Aorta (tissue), 5 donors: ENCODE measurements at regions of chr1 and their contacts with region 1.

Region 1: DNA sequence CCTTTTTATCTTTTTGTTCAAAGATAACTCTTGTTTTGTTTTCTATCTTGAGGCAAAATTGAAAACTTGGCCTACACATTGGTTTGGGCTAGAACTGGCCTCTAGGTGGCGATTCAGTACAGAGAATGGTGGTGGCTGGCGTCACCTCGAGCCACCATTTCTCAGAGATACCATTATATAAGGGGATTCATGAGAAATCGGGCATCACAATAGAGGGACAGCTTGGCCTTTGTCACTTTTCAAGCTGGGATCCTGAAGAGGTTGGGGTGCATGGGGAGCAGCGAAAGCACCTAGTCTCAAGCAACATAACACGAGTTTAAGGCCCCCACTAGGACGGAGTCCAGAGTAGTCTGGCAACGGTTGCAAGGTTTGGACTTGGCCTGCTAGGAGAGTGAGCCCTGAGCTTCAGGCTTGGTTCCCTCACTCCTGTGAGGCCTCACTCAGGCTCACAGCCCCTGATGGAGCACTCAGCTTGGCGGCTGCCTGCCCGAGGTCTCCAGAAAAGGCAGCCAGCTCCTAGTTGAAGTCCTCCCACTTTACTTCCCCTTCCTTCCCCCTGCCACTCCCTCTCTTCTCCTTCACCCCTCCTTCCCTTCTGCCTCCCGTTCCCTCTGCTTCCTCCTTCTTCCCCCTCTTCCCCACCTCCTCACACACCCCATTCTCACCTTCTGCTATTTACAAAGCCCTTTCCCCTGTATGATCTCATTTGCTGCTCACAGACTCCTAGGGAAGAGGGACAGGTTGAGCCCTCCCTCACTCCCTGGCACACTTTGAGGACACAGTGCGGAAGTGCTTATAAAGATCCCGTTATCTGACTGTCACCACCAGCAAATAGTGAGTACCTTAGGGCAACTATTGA is 67.8 kb downstream of the LRIG2 start:
- DNase-seq: peak in 1 of 2 donors; percentile 62
- ATAC-seq: peak; percentile 89
- H3K4me3 ChIP-seq: no peak overlapping the region
- H3K27ac ChIP-seq: no peak overlapping the region
- H3K4me1 ChIP-seq: peaks cover 0 to 3% of the 10 kb centered on the region in 2 donors
- H3K27me3 ChIP-seq: no peaks in the 10 kb centered on the region

Region 2: GRCh38 chr1:113677250-113678158 is 536.7 kb after region 1 on chr1:
- intact Hi-C with region 1: loop called (anchors 2 to 5 kb)
- DNase-seq: no peak
- ATAC-seq: no peak
- H3K4me3 ChIP-seq: no peak overlapping the region
- H3K27ac ChIP-seq: no peak overlapping the region
- H3K4me1 ChIP-seq: no peaks in the 10 kb centered on the region
- H3K27me3 ChIP-seq: no peaks in the 10 kb centered on the region